BJ (cell line): ENCODE measurements at regions of chr4 and their contacts with region 1.

Region 1: GRCh38 chr4:152408514-152409327 is 127.2 kb downstream of the FBXW7 start:
- DNase-seq: no peak
- H3K4me3 ChIP-seq: no peak overlapping the region
- H3K27me3 ChIP-seq: no peaks in the 10 kb centered on the region
- CTCF ChIP-seq: peak; percentile 67

Region 2: DNA sequence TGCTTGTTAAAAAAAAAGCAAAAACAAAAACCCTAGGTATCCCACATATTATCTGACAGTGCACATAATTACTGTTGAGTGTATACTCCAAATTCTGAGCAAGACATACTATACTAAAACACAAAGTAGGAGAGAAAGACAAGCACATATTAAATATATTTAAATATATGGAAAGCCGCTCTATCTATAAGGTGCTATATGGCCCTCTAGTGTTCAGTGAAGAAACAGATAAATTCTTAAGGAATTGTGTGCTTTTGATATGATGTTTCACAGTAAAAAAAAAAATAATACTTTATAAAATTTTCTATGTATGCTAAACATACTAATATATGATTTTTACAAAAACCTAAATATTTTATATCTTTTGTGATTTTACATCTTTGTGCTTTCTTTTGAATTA is 10.7 kb before region 1 on chr4:
- CTCF ChIA-PET with region 1: interaction called, 18 read pairs
- POLR2A ChIA-PET with region 1: no interaction called
- DNase-seq: no peak
- H3K4me3 ChIP-seq: no peak overlapping the region
- H3K27me3 ChIP-seq: no peaks in the 10 kb centered on the region
- CTCF ChIP-seq: no peak

Region 3: DNA sequence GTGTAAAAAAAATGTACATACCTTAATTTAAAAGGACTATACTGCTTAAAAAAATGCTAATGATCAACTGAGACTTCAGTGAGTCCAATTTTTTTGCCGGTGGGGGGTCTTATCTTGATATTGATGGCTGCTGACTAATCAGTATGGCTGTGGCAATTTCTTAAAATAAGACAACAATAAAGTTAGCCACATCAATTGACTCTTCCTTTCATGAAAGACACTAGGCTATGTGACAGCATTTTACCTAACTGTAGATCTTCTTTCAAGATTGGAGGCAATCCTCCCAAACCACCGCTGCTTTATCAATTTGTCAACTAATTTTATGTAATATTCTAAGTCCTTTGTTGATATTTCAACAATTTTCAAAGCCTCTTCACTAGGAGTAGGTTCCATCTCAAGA is 11.1 kb after region 1 on chr4:
- CTCF ChIA-PET with region 1: interaction called, 11 read pairs
- POLR2A ChIA-PET with region 1: no interaction called
- DNase-seq: no peak
- H3K4me3 ChIP-seq: no peak overlapping the region
- H3K27me3 ChIP-seq: no peaks in the 10 kb centered on the region
- CTCF ChIP-seq: no peak

Region 4: DNA sequence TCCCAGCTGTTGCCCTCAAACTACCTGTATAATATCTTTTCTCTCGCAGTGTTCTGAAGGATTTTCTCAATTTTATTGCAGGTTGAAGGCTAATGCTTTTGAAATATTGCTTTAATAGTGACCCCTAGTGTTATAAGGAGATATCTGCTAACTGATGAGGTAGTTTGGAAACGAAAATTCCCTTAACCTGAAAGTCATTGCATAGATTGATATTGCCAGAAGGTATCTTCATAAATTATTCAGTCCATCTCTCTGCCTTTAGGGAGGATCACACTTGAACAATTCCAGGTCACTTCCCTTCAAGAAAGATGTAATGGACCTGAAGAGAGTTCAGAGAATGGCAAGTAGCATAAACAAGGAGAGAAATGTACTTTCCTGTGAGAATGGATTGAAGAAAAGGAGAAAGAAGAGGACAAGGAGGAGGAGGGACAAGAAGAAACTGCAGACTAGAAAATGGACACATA is 326.7 kb after region 1 on chr4:
- CTCF ChIA-PET with region 1: interaction called, 10 read pairs
- POLR2A ChIA-PET with region 1: no interaction called
- DNase-seq: no peak
- H3K4me3 ChIP-seq: no peak overlapping the region
- H3K27me3 ChIP-seq: peaks cover 4% of the 10 kb centered on the region
- CTCF ChIP-seq: peak; percentile 56